ENCODE measurements at regions of chr3 and their contacts with region 1.

Region 1: DNA sequence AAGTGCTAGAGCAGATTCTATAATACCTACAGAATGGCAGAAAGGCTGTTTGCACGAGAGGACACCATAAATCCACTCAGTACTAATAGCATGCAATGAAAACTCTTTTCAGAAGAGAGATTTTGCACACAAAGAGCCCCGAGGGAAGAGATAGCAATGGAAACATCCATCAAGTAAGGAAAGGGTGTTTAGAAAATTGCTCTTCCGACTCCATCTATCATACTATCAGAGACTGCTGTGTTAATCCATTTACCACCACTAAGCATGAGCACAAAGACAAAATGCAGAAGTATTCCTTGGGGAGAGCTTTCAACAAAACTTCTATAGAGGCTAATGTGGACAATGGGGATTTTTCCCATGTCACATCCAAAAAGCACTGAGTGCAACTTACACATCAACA is 72.1 kb upstream of the PLAAT1 start:
- DNase-seq: no peak
- H3K4me3 ChIP-seq: no peak overlapping the region
- H3K27ac ChIP-seq: no peak overlapping the region
- H3K4me1 ChIP-seq: no peaks in the 10 kb centered on the region
- H3K27me3 ChIP-seq: no peaks in the 10 kb centered on the region
- CTCF ChIP-seq: no peak
- POLR2A ChIP-seq: no peak

Region 2: DNA sequence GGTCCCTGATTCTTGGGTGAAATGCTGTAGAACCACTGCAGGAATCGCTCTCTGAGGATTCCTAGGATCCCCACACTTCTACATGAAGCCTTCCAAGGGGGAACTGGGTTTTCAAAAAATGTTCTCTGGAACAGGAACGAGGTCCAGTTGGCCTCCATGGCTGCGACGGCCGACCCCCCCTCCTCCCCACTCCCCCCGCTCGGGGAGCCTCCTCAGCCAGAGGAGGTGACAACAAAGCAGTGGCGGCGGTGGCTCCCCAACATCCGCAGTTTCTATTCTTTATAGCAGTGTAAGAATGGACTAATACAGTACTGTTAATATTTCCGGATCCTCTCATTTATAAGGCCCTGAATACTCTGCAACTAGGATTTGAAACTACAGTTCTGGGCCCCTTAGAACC is 11.9 kb before region 1 on chr3:
- intact Hi-C with region 1: loop called (anchors 1 kb)
- DNase-seq: no peak
- H3K4me3 ChIP-seq: no peak overlapping the region
- H3K27ac ChIP-seq: no peak overlapping the region
- H3K4me1 ChIP-seq: no peaks in the 10 kb centered on the region
- H3K27me3 ChIP-seq: no peaks in the 10 kb centered on the region
- CTCF ChIP-seq: no peak
- POLR2A ChIP-seq: no peak

Region 3: GRCh38 chr3:193499119-193499770 is 330.3 kb after region 1 on chr3:
- intact Hi-C with region 1: no loop called
- DNase-seq: no peak
- H3K4me3 ChIP-seq: no peak overlapping the region
- H3K27ac ChIP-seq: no peak overlapping the region
- H3K4me1 ChIP-seq: no peaks in the 10 kb centered on the region
- H3K27me3 ChIP-seq: no peaks in the 10 kb centered on the region
- CTCF ChIP-seq: no peak
- POLR2A ChIP-seq: no peak

Measured in breast epithelium (tissue), 4 donors.